ENCODE measurements at regions of chr6 and their contacts with region 1.

Region 1: DNA sequence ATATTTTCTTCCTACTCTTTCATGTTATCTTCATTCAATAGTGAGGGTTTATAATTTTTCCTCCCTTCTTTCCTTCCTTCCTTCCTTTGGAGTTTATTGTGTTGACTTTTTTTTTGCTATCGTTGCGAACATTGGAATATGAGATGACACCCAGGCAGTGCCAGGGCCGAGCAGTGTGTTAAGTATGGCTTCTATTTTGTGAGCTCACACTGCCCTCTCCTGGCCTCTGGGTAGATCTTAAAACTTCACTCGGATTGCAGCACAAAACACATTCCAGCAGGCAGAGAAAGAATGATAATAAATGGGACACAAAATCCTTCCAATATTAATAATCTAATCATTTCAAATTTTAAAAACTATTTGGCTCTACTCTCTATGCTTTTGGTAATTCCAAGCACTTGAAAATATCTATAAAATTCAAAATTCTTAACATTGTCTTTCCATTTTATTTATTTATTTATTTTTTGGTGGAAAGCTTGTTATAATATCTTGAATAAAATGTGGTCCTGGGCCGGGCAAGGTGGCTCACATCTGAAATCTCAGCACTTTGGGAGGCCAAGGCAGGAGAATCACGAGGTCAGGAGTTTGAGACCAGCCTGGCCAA is 147.4 kb upstream of the OLIG3 start:
- DNase-seq: peak; percentile 82
- H3K4me3 ChIP-seq: no peak overlapping the region
- H3K27ac ChIP-seq: no peak overlapping the region
- H3K4me1 ChIP-seq: no peaks in the 10 kb centered on the region
- H3K27me3 ChIP-seq: peaks cover 2% of the 10 kb centered on the region
- CTCF ChIP-seq: peak; percentile 78

Region 2: DNA sequence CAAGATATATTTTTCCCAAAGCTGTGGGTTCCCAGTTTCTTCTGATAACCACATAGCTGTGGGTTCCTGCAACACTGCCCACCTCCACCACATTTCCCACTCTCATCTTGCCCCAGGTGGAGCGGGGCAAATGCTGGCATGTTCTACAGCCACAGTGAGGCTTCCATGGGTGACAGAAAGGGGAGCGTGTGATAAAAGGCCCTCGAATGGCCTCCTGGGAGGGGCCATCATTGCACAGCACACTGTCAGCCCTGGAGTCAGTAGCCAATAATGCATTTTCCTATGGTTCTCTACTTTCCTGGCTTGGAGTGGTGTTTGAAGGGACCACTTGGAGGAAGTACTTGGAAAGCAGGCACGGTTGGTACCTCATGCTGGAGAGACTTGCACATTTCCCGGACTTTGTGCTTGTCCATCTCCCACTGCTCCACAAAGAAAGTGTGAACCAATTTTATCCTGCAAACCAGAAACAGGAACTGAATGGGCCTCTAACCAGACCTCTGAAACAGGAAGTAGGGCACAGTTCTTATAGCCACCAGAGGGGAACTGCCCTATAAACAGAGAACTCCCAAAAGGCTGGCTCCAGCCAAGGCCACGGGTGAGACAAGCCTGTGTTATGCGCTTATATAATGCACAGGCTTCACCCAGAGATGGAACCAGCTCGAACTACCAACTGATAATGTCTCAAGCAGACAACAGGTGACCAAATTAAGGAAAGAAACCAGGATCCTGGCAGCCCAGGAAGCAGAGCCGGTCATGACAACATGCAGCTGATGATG is 857.9 kb before region 1 on chr6:
- CTCF ChIA-PET with region 1: no interaction called
- POLR2A ChIA-PET with region 1: no interaction called
- intact Hi-C with region 1: no loop called
- DNase-seq: no peak
- H3K4me3 ChIP-seq: no peak overlapping the region
- H3K27ac ChIP-seq: no peak overlapping the region
- H3K4me1 ChIP-seq: peaks cover 16% of the 10 kb centered on the region
- H3K27me3 ChIP-seq: no peaks in the 10 kb centered on the region
- CTCF ChIP-seq: no peak

Region 3: GRCh38 chr6:136967876-136968752 is 673.5 kb before region 1 on chr6:
- CTCF ChIA-PET with region 1: no interaction called
- POLR2A ChIA-PET with region 1: no interaction called
- intact Hi-C with region 1: loop called (anchors 5 kb)
- DNase-seq: peak; percentile 82
- H3K4me3 ChIP-seq: no peak overlapping the region
- H3K27ac ChIP-seq: no peak overlapping the region
- H3K4me1 ChIP-seq: no peaks in the 10 kb centered on the region
- H3K27me3 ChIP-seq: no peaks in the 10 kb centered on the region
- CTCF ChIP-seq: peak; percentile 84

Region 4: GRCh38 chr6:137076277-137077068 is 565.1 kb before region 1 on chr6:
- CTCF ChIA-PET with region 1: interaction called, 3 read pairs
- POLR2A ChIA-PET with region 1: no interaction called
- intact Hi-C with region 1: loop called (anchors 5 kb)
- DNase-seq: peak; percentile 70
- H3K4me3 ChIP-seq: no peak overlapping the region
- H3K27ac ChIP-seq: no peak overlapping the region
- H3K4me1 ChIP-seq: no peaks in the 10 kb centered on the region
- H3K27me3 ChIP-seq: no peaks in the 10 kb centered on the region
- CTCF ChIP-seq: peak; percentile 87

Region 5: GRCh38 chr6:137094411-137095008 is 547.1 kb before region 1 on chr6:
- CTCF ChIA-PET with region 1: interaction called, 8 read pairs
- POLR2A ChIA-PET with region 1: no interaction called
- intact Hi-C with region 1: loop called (anchors 2 kb)
- DNase-seq: peak; percentile 67
- H3K4me3 ChIP-seq: no peak overlapping the region
- H3K27ac ChIP-seq: no peak overlapping the region
- H3K4me1 ChIP-seq: no peaks in the 10 kb centered on the region
- H3K27me3 ChIP-seq: no peaks in the 10 kb centered on the region
- CTCF ChIP-seq: peak; percentile 68

Region 6: GRCh38 chr6:137271245-137272183 is 370.1 kb before region 1 on chr6:
- CTCF ChIA-PET with region 1: interaction called, 4 read pairs
- POLR2A ChIA-PET with region 1: no interaction called
- intact Hi-C with region 1: loop called (anchors 1 kb)
- DNase-seq: peak; percentile 56
- H3K4me3 ChIP-seq: no peak overlapping the region
- H3K27ac ChIP-seq: no peak overlapping the region
- H3K4me1 ChIP-seq: no peaks in the 10 kb centered on the region
- H3K27me3 ChIP-seq: peaks cover 4% of the 10 kb centered on the region
- CTCF ChIP-seq: peak; percentile 82

Region 7: GRCh38 chr6:137341681-137342195 is 299.8 kb before region 1 on chr6:
- CTCF ChIA-PET with region 1: no interaction called
- POLR2A ChIA-PET with region 1: no interaction called
- intact Hi-C with region 1: loop called (anchors 2 kb)
- DNase-seq: peak; percentile 57
- H3K4me3 ChIP-seq: no peak overlapping the region
- H3K27ac ChIP-seq: no peak overlapping the region
- H3K4me1 ChIP-seq: peaks cover 4% of the 10 kb centered on the region
- H3K27me3 ChIP-seq: peaks cover 18% of the 10 kb centered on the region
- CTCF ChIP-seq: peak; percentile 56

Region 8: DNA sequence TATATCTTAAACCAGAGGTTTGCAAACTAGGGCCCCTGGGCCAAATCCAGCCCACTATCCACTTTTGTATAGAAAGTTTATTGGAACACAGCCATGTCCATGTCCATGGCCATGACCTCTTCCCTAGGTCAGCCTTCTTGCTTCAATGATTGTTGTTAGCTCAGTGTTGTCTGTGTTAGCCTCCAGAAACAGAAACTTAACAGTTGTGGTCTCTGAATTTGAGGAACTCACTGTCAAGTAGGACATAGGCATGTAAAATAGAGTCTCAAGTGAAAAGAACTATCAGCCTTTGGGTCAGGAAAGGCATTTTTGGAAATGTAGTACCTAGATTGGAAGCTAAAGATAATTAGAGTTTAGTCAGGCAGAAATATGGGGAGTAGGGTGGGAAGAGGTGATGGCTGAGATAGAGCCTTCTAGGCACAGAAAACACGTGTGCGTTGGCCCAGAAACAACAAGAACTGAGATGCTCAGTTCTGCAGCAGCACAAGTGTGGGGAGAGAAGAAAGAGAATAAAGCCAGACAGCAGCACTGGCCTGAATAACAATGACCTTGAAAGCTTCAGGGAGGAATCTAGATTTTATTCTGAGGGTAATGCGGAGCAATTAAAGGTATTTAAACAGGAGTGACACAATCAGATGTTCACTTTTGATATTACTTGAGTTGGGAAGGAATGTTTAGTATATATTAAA is 60.4 kb before region 1 on chr6:
- CTCF ChIA-PET with region 1: no interaction called
- POLR2A ChIA-PET with region 1: no interaction called
- intact Hi-C with region 1: no loop called
- DNase-seq: no peak
- H3K4me3 ChIP-seq: no peak overlapping the region
- H3K27ac ChIP-seq: no peak overlapping the region
- H3K4me1 ChIP-seq: no peaks in the 10 kb centered on the region
- H3K27me3 ChIP-seq: no peaks in the 10 kb centered on the region
- CTCF ChIP-seq: no peak

Measured in A673 (cell line).